Mammary epithelial cell (primary cell): ENCODE measurements at regions of chr6 and their contacts with region 1.

Region 1: GRCh38 chr6:169890049-169890448 is 138.6 kb downstream of the ERMARD start:
- DNase-seq: no peak
- H3K4me3 ChIP-seq: no peak overlapping the region
- H3K27ac ChIP-seq: no peak overlapping the region
- H3K4me1 ChIP-seq: peaks cover 11% of the 10 kb centered on the region
- H3K27me3 ChIP-seq: no peaks in the 10 kb centered on the region
- CTCF ChIP-seq: no peak

Region 2: DNA sequence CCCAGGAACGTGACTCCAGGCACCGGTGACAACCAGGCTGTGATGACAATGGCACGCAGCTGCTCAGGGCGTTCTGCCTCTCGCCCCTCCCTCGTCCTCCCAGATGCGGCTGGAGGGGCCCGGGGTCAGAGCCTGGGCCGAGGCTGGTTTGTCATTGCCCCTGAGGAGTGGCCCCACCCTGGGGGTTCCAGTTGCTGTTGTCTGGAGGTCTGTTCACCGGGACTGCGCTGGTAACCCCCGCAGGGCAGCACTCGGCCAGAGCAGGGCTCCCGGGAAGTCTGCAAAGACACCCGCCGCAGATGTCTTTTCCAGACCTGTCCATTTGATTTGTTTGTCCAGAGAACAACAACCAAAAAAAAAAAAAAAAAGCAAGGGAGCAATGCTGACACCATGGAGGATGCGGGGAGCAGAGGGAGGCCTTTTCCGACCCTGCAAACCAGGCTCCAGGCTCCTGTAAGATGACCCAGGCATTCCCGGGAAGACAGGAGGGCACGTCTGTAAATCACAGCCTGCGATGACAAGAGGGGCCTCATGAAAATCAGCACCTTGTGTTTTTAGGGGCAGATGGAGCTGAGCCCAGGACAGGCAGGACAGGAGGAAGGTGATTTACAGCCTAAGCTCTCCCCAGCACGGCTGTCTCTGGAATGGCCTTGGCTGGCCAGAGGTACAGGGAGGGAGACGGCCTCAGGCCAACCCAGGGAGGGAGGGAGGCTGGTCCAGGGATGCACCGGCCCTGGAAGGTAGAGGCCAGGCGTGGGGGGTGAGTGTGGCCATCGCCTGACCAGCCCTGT is 50.6 kb after region 1 on chr6:
- CTCF ChIA-PET with region 1: no interaction called
- dilution Hi-C with region 1: loop called (anchors 5 kb)
- in situ Hi-C with region 1: no loop called
- intact Hi-C with region 1: no loop called
- DNase-seq: no peak
- H3K4me3 ChIP-seq: no peak overlapping the region
- H3K27ac ChIP-seq: no peak overlapping the region
- H3K4me1 ChIP-seq: no peaks in the 10 kb centered on the region
- H3K27me3 ChIP-seq: no peaks in the 10 kb centered on the region
- CTCF ChIP-seq: no peak

Region 3: DNA sequence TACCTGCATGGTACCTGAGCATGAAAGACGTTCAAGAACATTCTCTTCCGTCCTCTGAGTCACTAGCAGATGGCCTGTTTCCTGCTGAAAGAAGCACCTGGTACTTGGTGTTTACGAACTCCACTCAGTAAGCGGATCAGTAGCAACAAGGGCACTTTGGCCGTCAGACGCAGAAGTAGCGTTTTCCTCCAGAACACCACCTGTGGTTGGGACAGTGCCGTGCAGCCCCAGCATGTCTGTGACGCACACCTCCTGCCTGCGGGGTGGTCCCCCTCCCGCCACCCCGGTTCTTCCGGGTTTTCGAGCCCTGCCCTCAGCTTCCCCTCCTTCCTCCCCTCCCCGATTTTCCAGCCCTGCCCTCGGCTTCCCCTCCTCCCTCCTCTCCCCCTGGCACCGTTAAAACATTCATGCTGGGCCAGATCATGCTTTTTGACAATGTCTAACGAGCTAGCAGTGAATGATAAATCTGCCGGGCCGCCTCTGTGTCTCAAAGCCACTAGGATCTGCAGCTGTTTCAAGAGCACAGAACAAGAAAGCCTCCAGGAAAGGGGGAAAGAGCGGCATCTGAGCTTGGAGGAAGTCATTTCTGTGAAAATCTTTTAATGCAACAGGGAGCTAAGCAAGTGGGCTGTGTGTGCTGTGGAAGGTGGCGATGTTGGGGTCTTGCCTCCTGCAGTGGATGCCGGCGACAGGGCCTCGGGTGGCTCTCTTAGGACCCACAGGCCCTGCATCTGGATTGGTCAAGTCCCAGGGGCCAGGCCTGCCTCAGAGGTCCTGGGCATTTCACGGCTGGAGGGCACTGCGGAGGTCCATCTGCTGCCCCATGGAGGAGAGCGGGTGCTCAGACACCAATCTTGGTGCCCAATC is 69.3 kb after region 1 on chr6:
- CTCF ChIA-PET with region 1: no interaction called
- dilution Hi-C with region 1: no loop called
- in situ Hi-C with region 1: no loop called
- intact Hi-C with region 1: no loop called
- DNase-seq: no peak
- H3K4me3 ChIP-seq: no peak overlapping the region
- H3K27ac ChIP-seq: no peak overlapping the region
- H3K4me1 ChIP-seq: no peaks in the 10 kb centered on the region
- H3K27me3 ChIP-seq: no peaks in the 10 kb centered on the region
- CTCF ChIP-seq: peak in 1 of 2 donors; percentile 4

Region 4: GRCh38 chr6:170178561-170179477 is 288.8 kb after region 1 on chr6:
- CTCF ChIA-PET with region 1: no interaction called
- dilution Hi-C with region 1: no loop called
- in situ Hi-C with region 1: no loop called
- intact Hi-C with region 1: no loop called
- DNase-seq: peak; percentile 69
- H3K4me3 ChIP-seq: no peak overlapping the region
- H3K27ac ChIP-seq: no peak overlapping the region
- H3K4me1 ChIP-seq: peaks cover 17% of the 10 kb centered on the region
- H3K27me3 ChIP-seq: no peaks in the 10 kb centered on the region
- CTCF ChIP-seq: no peak

Region 5: DNA sequence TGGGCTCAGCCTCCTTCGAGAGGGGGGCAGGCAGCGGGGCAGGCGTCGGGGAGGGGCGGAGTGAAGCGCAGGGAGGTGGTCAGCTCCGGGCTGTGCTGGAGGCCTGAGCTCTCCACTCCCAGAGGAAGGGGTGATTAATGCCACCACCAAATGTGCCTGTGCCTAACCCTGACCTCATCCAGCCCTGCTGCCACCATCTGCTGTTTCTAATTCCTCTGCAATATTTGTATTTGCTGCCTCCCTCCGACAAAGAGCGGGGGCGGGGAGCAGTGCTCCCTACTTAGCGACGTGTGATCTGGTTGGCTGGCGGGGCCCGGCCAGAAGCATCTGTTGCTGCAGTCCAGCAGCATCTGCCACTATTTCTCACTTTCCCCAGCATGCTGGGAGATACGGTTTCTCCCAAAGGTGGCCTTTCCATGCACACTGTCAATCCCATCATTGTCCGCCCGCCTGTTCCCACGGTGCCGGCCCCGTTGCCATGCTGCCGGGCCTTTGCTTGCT is 353.8 kb after region 1 on chr6:
- CTCF ChIA-PET with region 1: no interaction called
- dilution Hi-C with region 1: no loop called
- in situ Hi-C with region 1: no loop called
- intact Hi-C with region 1: no loop called
- DNase-seq: no peak
- H3K4me3 ChIP-seq: no peak overlapping the region
- H3K27ac ChIP-seq: no peak overlapping the region
- H3K4me1 ChIP-seq: no peaks in the 10 kb centered on the region
- H3K27me3 ChIP-seq: no peaks in the 10 kb centered on the region
- CTCF ChIP-seq: no peak